Psoas muscle (tissue), 8 donors: ENCODE measurements at regions of chr9 and their contacts with region 1.

Region 1: GRCh38 chr9:37602817-37603216 is 10.4 kb upstream of the TOMM5 start:
- DNase-seq: peak; percentile 61 to 87
- ATAC-seq: peak; percentile 97 to 99 (median 98)
- H3K4me3 ChIP-seq: no peak overlapping the region
- H3K27ac ChIP-seq: peak overlapping the region; percentile 5
- H3K4me1 ChIP-seq: peaks cover 11% of the 10 kb centered on the region
- H3K27me3 ChIP-seq: no peaks in the 10 kb centered on the region
- CTCF ChIP-seq: no peak

Region 2: DNA sequence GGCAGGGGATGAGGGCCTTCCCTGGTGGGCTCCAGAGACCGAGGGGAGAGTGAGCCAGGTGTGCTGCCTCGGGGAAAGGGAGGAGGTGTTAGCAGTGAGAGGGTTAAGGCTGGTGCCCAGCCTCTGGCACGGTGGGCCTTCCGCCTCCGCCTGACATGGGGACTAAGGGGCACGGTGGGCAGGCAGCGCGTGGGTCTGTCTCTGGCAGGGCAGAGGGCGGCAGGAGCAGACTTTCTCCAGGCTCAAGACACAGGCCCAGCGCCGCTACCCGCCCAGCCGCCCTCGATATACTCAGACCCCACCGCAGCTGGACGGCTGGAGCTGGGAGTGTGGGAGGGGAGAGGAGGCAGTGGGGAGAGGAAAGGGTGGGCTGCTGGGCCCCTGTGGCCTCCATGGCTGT is 33.0 kb after region 1 on chr9:
- intact Hi-C with region 1: loop called in 1 of 2 experiments (anchors 2 kb)
- DNase-seq: no peak
- ATAC-seq: no peak
- H3K4me3 ChIP-seq: no peak overlapping the region
- H3K27ac ChIP-seq: no peak overlapping the region
- H3K4me1 ChIP-seq: peaks cover 12% of the 10 kb centered on the region
- H3K27me3 ChIP-seq: no peaks in the 10 kb centered on the region
- CTCF ChIP-seq: no peak

Region 3: DNA sequence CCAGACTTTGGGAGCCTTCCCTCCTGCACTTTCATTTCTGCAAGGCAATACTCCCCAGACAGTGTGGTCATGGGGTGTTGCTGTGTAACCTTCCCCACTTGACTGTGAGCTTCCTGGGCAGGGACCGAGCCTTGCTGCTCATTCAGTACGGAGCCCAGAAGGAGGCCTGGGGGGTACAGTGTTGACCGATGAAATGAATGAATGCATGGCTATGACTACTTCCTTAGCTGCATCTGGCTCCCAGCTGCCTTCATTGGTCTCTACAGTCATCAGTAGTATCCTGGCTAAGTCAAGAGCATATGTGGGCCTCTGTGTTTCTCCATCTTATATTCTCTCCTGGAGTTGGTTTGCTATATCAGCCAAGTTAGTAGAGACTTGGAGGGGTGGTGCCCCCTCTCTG is 57.9 kb after region 1 on chr9:
- intact Hi-C with region 1: loop called in 1 of 2 experiments (anchors 5 kb)
- DNase-seq: no peak
- ATAC-seq: no peak
- H3K4me3 ChIP-seq: no peak overlapping the region
- H3K27ac ChIP-seq: no peak overlapping the region
- H3K4me1 ChIP-seq: no peaks in the 10 kb centered on the region
- H3K27me3 ChIP-seq: no peaks in the 10 kb centered on the region
- CTCF ChIP-seq: no peak